PC-3 (cell line): ENCODE measurements at regions of chr11 and their contacts with region 1.

Region 1: DNA sequence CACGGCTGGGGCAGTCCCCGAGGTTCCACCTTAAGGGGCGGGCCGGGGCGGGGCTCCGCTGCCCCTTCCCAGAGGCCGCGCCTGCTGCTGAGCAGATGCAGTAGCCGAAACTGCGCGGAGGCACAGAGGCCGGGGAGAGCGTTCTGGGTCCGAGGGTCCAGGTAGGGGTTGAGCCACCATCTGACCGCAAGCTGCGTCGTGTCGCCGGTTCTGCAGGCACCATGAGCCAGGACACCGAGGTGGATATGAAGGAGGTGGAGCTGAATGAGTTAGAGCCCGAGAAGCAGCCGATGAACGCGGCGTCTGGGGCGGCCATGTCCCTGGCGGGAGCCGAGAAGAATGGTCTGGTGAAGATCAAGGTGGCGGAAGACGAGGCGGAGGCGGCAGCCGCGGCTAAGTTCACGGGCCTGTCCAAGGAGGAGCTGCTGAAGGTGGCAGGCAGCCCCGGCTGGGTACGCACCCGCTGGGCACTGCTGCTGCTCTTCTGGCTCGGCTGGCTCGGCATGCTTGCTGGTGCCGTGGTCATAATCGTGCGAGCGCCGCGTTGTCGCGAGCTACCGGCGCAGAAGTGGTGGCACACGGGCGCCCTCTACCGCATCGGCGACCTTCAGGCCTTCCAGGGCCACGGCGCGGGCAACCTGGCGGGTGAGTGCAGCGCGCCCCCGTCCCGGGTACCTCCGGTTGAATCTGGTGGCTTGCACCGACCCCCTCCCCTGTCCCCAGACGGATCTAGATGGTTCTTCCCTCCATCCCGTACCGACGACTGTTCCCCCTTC is at the start of gene SLC3A2:
- DNase-seq: peak; percentile 93
- ATAC-seq: peak; percentile 82
- H3K4me3 ChIP-seq: peak within 1 kb of the TSS; percentile 85
- H3K27ac ChIP-seq: peak within 1 kb of the TSS; percentile 93
- H3K4me1 ChIP-seq: peaks cover 38% of the 10 kb centered on the region
- H3K27me3 ChIP-seq: no peaks in the 10 kb centered on the region
- CTCF ChIP-seq: peak; percentile 81
- total RNA-seq, gene SLC3A2: 243 and 304 TPM in 2 replicates

Region 2: GRCh38 chr11:62841361-62842184 is 39.4 kb before region 1 on chr11:
- CTCF ChIA-PET with region 1: no interaction called
- POLR2A ChIA-PET with region 1: interaction called, 22 read pairs
- intact Hi-C with region 1: loop called (anchors 1 kb)
- DNase-seq: peak; percentile 100
- ATAC-seq: peak; percentile 75
- H3K4me3 ChIP-seq: peak overlapping the region; percentile 64
- H3K27ac ChIP-seq: peak overlapping the region; percentile 90
- H3K4me1 ChIP-seq: peaks cover 6% of the 10 kb centered on the region
- H3K27me3 ChIP-seq: no peaks in the 10 kb centered on the region
- CTCF ChIP-seq: no peak